ENCODE measurements at regions of chr1 and their contacts with region 1.

Region 1: GRCh38 chr1:89454845-89455521 is 69.6 kb upstream of the LRRC8B start:
- DNase-seq: no peak
- H3K4me3 ChIP-seq: no peak overlapping the region
- H3K27ac ChIP-seq: no peak overlapping the region
- H3K4me1 ChIP-seq: peaks cover 0 to 5% (median 0%) of the 10 kb centered on the region in 6 donors
- H3K27me3 ChIP-seq: no peaks in the 10 kb centered on the region
- CTCF ChIP-seq: peak; percentile 17 to 72 (median 61)
- POLR2A ChIP-seq: no peak

Region 2: GRCh38 chr1:88973520-88974137 is 481.4 kb before region 1 on chr1:
- intact Hi-C with region 1: loop called (anchors 10 kb)
- DNase-seq: no peak
- H3K4me3 ChIP-seq: no peak overlapping the region
- H3K27ac ChIP-seq: no peak overlapping the region
- H3K4me1 ChIP-seq: peaks cover 0 to 39% (median 13%) of the 10 kb centered on the region in 6 donors
- H3K27me3 ChIP-seq: no peaks in the 10 kb centered on the region
- CTCF ChIP-seq: peak in 10 of 11 experiments; percentile 23 to 72 (median 59)
- POLR2A ChIP-seq: no peak

Region 3: GRCh38 chr1:88998716-88999115 is 456.3 kb before region 1 on chr1:
- intact Hi-C with region 1: loop called (anchors 5 kb)
- DNase-seq: no peak
- H3K4me3 ChIP-seq: no peak overlapping the region
- H3K27ac ChIP-seq: no peak overlapping the region
- H3K4me1 ChIP-seq: peaks cover 0 to 34% (median 15%) of the 10 kb centered on the region in 6 donors
- H3K27me3 ChIP-seq: no peaks in the 10 kb centered on the region
- CTCF ChIP-seq: peak in 10 of 11 experiments; percentile 21 to 76 (median 62)
- POLR2A ChIP-seq: no peak